Activated CD4-positive, alpha-beta memory T cell treated with anti-CD3 and anti-CD28 coated beads for 36 hours (primary cell): ENCODE measurements at regions of chr9 and their contacts with region 1.

Region 1: DNA sequence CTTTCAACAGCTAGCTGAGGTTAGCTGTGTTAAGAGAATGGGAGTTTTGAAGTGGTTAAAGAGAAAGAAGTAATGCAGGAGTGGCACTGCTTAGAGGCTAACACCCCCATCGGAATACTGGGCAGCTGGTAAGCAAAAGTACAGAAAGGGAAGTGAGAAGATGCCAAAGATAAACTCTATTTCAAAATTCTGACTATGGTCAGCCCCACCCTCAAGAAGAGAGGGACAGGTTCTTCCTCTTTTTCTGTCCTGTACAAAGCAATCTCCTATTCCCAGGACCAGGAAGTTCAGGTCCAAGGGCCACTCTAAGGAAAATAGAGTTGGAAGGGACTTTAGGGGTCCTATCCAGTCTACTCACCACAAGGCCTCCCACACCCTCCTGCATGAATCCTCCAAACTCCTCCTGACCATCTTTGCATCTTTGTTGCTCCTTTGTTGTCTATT is 45.9 kb upstream of the JAK2 start:
- DNase-seq: peak; percentile 25
- H3K4me3 Mint-ChIP-seq: no peak overlapping the region
- H3K27ac Mint-ChIP-seq: peak overlapping the region; percentile 91
- H3K4me1 Mint-ChIP-seq: peaks cover 74% of the 10 kb centered on the region
- H3K27me3 Mint-ChIP-seq: no peaks in the 10 kb centered on the region

Region 2: DNA sequence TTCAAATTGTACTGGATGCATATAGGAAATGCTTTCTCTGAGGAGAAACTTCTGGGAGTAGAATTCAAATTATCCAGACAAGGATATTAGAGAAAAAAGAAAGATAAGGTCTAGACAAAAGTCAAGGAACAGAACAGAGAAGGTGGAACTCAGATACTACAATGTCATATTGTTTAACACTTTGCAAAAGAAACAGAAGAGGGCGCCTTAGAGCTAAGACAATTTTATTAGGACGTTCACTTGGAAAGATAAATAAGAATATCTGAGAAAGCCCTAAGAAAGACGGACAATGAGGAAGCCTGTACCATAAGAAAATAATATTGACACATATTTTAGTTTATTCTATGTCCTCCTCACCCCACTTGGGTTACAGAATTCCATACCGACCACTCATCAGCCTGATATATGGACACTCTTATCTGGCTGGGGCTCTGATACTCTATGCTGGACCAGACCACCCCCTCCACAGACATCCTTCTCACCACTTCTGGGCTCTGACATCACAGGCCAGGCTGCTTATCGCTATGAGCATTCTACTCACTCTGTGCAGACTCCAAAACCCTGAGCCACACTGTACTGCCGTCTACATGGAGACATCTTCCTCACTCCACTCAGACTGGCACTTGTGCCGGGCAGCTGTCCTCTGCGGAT is 189.0 kb before region 1 on chr9:
- CTCF ChIA-PET with region 1: no interaction called
- POLR2A ChIA-PET with region 1: no interaction called
- intact Hi-C with region 1: loop called (anchors 5 kb)
- DNase-seq: no peak
- H3K4me3 Mint-ChIP-seq: no peak overlapping the region
- H3K27ac Mint-ChIP-seq: no peak overlapping the region
- H3K4me1 Mint-ChIP-seq: peaks cover 20% of the 10 kb centered on the region
- H3K27me3 Mint-ChIP-seq: no peaks in the 10 kb centered on the region

Region 3: GRCh38 chr9:4792572-4793458 is 146.3 kb before region 1 on chr9 and contains the start of gene RCL1:
- CTCF ChIA-PET with region 1: no interaction called
- POLR2A ChIA-PET with region 1: interaction called, 3 read pairs
- intact Hi-C with region 1: loop called (anchors 2 kb)
- DNase-seq: peak; percentile 98
- H3K4me3 Mint-ChIP-seq: peak within 1 kb of the TSS; percentile 93
- H3K27ac Mint-ChIP-seq: peak within 1 kb of the TSS; percentile 86
- H3K4me1 Mint-ChIP-seq: peaks cover 49% of the 10 kb centered on the region
- H3K27me3 Mint-ChIP-seq: no peaks in the 10 kb centered on the region
- total RNA-seq, gene RCL1: 26.0 to 28.2 TPM

Region 4: GRCh38 chr9:4866239-4866969 is 72.7 kb before region 1 on chr9:
- CTCF ChIA-PET with region 1: no interaction called
- POLR2A ChIA-PET with region 1: no interaction called
- intact Hi-C with region 1: loop called (anchors 2 kb)
- DNase-seq: peak; percentile 25
- H3K4me3 Mint-ChIP-seq: peak overlapping the region; percentile 35
- H3K27ac Mint-ChIP-seq: peak overlapping the region; percentile 77
- H3K4me1 Mint-ChIP-seq: peaks cover 19% of the 10 kb centered on the region
- H3K27me3 Mint-ChIP-seq: no peaks in the 10 kb centered on the region

Region 5: DNA sequence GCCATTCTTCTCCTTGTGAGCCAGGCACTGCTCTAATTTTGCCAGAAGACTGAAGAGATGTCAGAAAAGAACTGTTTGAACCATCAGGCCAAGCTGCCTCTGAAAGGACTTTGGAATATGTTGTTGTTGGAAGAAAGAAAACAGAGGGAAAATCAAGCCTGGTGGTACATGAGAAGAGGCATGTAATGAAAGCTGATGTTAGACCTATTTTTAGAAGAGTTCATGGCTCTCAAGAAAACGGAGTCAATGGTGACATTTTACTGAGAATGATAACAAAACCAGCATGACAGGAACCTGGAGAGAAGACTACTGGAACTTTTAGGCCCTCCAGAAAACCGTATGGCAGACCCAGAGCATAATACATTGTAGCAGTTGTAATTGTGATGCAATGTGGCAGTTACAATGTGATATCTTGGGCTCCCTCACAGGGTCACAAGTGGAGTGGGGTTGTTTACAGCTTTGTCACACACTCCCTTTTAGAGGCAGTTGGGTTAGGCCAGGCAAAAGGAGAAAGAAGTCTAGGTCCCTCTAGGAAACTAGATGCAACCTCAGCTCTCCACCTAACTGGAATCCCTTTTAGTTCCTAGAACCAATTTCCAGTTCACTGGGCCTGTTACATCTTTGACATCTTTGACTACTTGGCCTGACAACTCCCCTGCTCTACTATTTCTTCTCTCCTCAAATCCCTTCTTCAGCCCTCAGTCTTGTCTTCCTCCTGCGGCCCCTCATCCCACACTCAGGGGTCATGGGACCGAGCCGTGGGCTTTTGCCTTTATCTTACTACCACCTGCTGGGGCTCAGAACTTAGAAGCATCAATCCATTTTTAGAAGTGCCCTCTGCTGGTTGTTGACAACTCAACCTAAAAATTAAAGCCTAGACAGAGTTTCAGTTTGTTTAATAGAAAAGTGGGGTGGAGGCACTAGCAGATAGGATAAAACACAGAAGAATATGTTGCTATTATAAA is 15.3 kb before region 1 on chr9:
- CTCF ChIA-PET with region 1: interaction called, 3 read pairs
- POLR2A ChIA-PET with region 1: no interaction called
- intact Hi-C with region 1: loop called (anchors 1 kb)
- DNase-seq: no peak
- H3K4me3 Mint-ChIP-seq: no peak overlapping the region
- H3K27ac Mint-ChIP-seq: no peak overlapping the region
- H3K4me1 Mint-ChIP-seq: peaks cover 22% of the 10 kb centered on the region
- H3K27me3 Mint-ChIP-seq: no peaks in the 10 kb centered on the region

Region 6: GRCh38 chr9:4970970-4971641 is 32.0 kb after region 1 on chr9:
- CTCF ChIA-PET with region 1: interaction called, 7 read pairs
- POLR2A ChIA-PET with region 1: interaction called, 6 read pairs
- intact Hi-C with region 1: loop called (anchors 1 kb)
- DNase-seq: peak; percentile 86
- H3K4me3 Mint-ChIP-seq: no peak overlapping the region
- H3K27ac Mint-ChIP-seq: no peak overlapping the region
- H3K4me1 Mint-ChIP-seq: peaks cover 26% of the 10 kb centered on the region
- H3K27me3 Mint-ChIP-seq: no peaks in the 10 kb centered on the region

Region 7: DNA sequence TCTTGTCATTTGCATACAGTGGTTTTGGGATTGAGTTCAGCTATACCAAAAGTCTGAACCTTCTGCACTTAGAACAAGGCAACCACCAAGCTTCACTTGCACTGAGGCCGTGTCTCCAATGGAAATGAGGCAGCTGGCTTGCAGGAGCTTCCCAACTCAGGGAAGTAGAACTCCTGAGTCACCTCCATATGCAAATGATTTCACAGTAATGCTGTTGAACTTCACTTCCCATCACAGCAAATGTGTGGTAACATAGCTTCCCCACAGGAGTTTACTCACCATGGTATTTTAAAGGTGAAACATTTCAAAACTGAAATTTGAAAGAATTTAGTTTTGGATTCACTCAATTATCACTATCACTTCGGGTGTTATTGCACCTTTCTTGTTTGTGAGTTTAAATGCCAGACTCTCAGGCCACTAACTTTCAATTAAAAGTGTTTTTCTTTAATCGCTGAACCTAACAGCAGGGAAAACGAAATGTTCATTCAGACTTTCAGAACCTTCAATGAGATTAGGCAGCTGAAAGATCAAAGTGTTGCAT is 520.2 kb after region 1 on chr9:
- CTCF ChIA-PET with region 1: no interaction called
- POLR2A ChIA-PET with region 1: no interaction called
- intact Hi-C with region 1: loop called (anchors 5 kb)
- DNase-seq: peak; percentile 57
- H3K4me3 Mint-ChIP-seq: peak overlapping the region; percentile 68
- H3K27ac Mint-ChIP-seq: peak overlapping the region; percentile 87
- H3K4me1 Mint-ChIP-seq: peaks cover 73% of the 10 kb centered on the region
- H3K27me3 Mint-ChIP-seq: no peaks in the 10 kb centered on the region